Activated CD4-positive, alpha-beta memory T cell treated with anti-CD3 and anti-CD28 coated beads for 36 hours (primary cell): ENCODE measurements at regions of chr19 and their contacts with region 1.

Region 1: DNA sequence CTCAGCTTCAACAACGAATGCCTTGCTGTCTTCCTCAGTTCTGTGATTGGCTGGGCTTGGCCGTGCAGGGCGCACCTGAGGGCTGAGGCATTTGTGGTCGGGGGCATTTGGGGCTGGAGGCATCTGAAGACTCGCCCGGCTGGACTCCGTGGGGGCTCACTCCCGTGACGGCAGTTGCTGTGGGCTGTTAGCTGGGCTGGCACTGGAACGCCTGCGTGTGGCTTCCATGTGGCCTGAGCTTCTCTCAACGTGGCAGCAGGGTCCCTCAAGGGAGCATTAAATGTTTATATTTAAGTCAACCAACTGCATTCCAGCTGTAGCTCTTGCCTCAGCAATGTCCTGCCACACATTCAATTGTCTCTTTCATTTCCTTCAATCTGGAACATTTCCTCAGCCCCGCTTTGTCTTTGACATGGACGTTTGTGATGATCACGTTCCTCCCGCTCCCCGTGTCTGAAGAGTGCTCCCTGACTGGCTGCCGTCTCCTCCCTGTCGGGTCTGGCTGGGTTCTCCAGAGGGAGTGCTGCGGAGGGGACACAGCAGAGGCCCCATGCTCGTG is 21.0 kb downstream of the CCDC8 start:
- DNase-seq: no peak
- H3K4me3 Mint-ChIP-seq: no peak overlapping the region
- H3K27ac Mint-ChIP-seq: no peak overlapping the region
- H3K4me1 Mint-ChIP-seq: peaks cover 2% of the 10 kb centered on the region
- H3K27me3 Mint-ChIP-seq: no peaks in the 10 kb centered on the region

Region 2: DNA sequence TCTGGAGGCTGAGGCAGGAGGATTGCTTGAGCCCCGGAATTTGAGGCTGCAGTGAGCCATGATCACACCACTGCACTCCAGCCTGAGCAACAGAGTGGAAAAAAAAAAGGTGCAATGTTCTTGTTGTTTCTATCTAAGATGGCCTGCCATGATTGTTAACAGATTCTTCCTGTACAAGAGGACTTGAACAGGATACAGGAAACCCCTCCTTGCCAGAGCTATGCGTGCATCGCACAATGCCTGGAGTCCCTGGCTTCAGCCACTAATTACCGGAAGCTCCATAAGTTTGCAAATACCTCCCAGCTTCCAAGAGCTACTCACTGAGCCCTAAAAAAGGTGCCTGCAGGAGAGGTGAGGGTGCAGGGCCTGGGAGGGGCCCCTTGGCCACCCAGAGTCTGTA is 108.6 kb before region 1 on chr19:
- CTCF ChIA-PET with region 1: interaction called, 11 read pairs
- POLR2A ChIA-PET with region 1: no interaction called
- intact Hi-C with region 1: loop called (anchors 1 kb)
- DNase-seq: no peak
- H3K4me3 Mint-ChIP-seq: no peak overlapping the region
- H3K27ac Mint-ChIP-seq: no peak overlapping the region
- H3K4me1 Mint-ChIP-seq: no peaks in the 10 kb centered on the region
- H3K27me3 Mint-ChIP-seq: peaks cover 10% of the 10 kb centered on the region

Region 3: DNA sequence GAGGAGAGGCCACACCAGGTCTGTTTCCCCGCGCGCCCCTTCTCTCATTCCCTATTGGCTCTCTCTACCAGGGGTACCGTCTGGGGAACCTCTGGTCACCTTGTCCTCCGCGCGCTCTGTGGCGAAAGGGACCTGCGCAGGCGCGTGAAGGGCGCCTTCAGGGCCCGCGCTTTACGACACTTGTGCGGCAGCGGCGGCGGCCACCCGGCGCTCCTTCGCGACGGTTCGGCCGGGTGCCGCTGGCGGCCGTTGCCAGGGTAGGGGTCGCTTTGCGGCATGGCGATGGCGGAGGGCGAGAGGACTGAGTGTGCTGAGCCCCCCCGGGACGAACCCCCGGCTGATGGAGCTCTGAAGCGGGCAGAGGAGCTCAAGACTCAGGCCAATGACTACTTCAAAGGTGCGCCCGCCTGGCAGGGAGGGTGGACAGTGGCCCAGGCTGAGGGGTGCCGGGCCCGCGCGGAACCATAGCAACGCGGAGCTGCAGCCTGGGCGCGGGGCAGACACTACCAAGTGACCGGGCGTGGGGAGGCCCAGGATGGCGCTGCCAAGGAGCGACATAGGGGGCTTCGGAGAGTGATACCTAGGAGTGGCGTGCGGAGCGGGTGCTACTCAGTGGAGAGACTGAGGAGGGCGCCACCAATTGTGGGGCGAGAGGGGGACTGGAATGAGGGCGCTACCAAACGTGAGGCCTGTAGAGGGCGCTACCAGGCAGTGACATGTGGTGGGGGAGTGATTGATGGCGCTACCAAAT is 45.3 kb before region 1 on chr19 and contains the start of gene PPP5C:
- CTCF ChIA-PET with region 1: no interaction called
- POLR2A ChIA-PET with region 1: no interaction called
- intact Hi-C with region 1: loop called (anchors 1 kb)
- DNase-seq: peak; percentile 93
- H3K4me3 Mint-ChIP-seq: peak within 1 kb of the TSS; percentile 94
- H3K27ac Mint-ChIP-seq: peak within 1 kb of the TSS; percentile 90
- H3K4me1 Mint-ChIP-seq: peaks cover 47% of the 10 kb centered on the region
- H3K27me3 Mint-ChIP-seq: no peaks in the 10 kb centered on the region
- total RNA-seq, gene PPP5C: 76.9 to 82.5 TPM

Region 4: GRCh38 chr19:46404055-46404752 is 11.9 kb after region 1 on chr19:
- CTCF ChIA-PET with region 1: interaction called, 12 read pairs
- POLR2A ChIA-PET with region 1: no interaction called
- intact Hi-C with region 1: no loop called
- DNase-seq: no peak
- H3K4me3 Mint-ChIP-seq: no peak overlapping the region
- H3K27ac Mint-ChIP-seq: no peak overlapping the region
- H3K4me1 Mint-ChIP-seq: peaks cover 15% of the 10 kb centered on the region
- H3K27me3 Mint-ChIP-seq: peaks cover 56% of the 10 kb centered on the region

Region 5: GRCh38 chr19:46481947-46482346 is 89.6 kb after region 1 on chr19:
- CTCF ChIA-PET with region 1: interaction called, 30 read pairs
- POLR2A ChIA-PET with region 1: no interaction called
- intact Hi-C with region 1: no loop called
- DNase-seq: no peak
- H3K4me3 Mint-ChIP-seq: no peak overlapping the region
- H3K27ac Mint-ChIP-seq: no peak overlapping the region
- H3K4me1 Mint-ChIP-seq: peaks cover 4% of the 10 kb centered on the region
- H3K27me3 Mint-ChIP-seq: peaks cover 47% of the 10 kb centered on the region

Region 6: GRCh38 chr19:46487802-46488445 is 95.6 kb after region 1 on chr19:
- CTCF ChIA-PET with region 1: interaction called, 30 read pairs
- POLR2A ChIA-PET with region 1: no interaction called
- intact Hi-C with region 1: loop called (anchors 1 kb)
- DNase-seq: peak; percentile 83
- H3K4me3 Mint-ChIP-seq: no peak overlapping the region
- H3K27ac Mint-ChIP-seq: no peak overlapping the region
- H3K4me1 Mint-ChIP-seq: peaks cover 8% of the 10 kb centered on the region
- H3K27me3 Mint-ChIP-seq: peaks cover 62% of the 10 kb centered on the region

Region 7: GRCh38 chr19:46728693-46729676 is 336.7 kb after region 1 on chr19:
- CTCF ChIA-PET with region 1: no interaction called
- POLR2A ChIA-PET with region 1: no interaction called
- intact Hi-C with region 1: no loop called
- DNase-seq: peak; percentile 82
- H3K4me3 Mint-ChIP-seq: no peak overlapping the region
- H3K27ac Mint-ChIP-seq: no peak overlapping the region
- H3K4me1 Mint-ChIP-seq: peaks cover 18% of the 10 kb centered on the region
- H3K27me3 Mint-ChIP-seq: no peaks in the 10 kb centered on the region